ENCODE measurements at regions of chr6 and their contacts with region 1.

Region 1: DNA sequence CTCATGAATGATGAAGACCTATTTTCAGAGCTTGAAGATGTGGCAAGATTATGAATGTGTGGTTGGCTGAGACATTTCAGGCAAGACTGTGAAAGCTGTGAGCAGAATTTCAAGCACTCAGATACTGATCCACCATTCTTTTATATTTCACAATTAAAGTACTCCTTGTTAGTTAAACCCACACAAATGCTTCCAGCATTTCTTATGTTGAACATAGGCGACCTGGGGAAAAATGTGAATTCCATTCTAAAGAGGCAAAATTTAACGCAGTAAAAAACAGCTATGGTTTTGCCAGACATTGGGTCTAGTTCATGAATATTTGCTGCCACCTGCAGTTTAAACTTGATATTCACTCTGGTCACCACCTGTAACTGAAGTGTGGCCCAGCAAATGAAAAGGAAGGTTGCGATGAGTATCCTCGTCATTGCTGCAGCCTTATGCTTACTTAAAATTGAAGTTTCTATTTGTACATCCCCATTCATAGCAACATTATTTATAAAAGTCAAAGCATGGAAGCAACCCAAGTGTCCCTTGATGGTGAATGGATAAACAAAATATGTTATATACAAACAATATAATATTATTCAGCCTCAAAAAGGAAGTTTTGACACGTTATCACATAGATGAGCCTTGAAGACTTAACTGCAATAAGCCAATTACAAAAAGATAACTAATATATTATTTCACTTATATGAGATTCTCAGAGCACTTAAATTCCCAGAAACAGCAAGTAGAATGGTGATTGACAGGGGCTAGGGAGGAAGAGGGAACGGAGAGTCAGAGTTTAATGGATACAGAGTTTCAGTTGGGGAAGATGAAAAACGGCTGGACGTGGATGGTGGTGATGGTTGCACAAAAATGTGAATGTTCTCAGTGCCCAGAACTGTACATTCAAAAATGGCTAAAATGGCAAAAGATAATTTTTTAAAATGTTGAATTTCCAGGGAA is 32.4 kb upstream of the FAM184A start:
- DNase-seq: peak in 7 of 9 experiments; percentile 13 to 77 (median 48)
- ATAC-seq: peak; percentile 83
- H3K4me3 ChIP-seq: no peak overlapping the region
- H3K4me3 Mint-ChIP-seq: no peak overlapping the region
- H3K27ac ChIP-seq: no peak overlapping the region
- H3K27ac Mint-ChIP-seq: no peak overlapping the region
- H3K4me1 ChIP-seq: no peaks in the 10 kb centered on the region
- H3K4me1 Mint-ChIP-seq: peaks cover 11% of the 10 kb centered on the region
- H3K27me3 ChIP-seq: no peaks in the 10 kb centered on the region
- H3K27me3 Mint-ChIP-seq: no peaks in the 10 kb centered on the region
- CTCF ChIP-seq: peak; percentile 74

Region 2: DNA sequence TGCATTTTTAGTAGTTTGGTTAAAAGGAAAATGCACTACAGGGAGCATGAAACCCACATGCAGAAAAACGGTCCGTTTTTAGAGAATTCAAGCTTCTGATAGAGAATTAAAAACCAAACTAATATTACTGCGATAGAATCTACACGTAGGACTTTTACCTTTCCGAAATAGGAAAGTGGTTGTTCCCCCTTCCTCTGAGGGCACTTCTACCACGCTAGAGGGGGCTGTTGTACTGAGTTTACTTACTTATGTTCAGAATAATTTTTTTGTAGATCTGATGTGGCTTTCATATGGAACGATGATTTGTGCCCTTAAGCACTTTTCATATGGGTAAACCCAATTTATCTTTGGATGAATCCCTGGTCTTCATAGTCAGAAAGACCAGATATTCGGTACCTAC is 827.1 kb before region 1 on chr6:
- CTCF ChIA-PET with region 1: interaction called, 40 read pairs
- POLR2A ChIA-PET with region 1: no interaction called
- intact Hi-C with region 1: loop called (anchors 1 kb)
- DNase-seq: peak in 8 of 9 experiments; percentile 14 to 74 (median 52)
- ATAC-seq: peak; percentile 61
- H3K4me3 ChIP-seq: no peak overlapping the region
- H3K4me3 Mint-ChIP-seq: no peak overlapping the region
- H3K27ac ChIP-seq: no peak overlapping the region
- H3K27ac Mint-ChIP-seq: no peak overlapping the region
- H3K4me1 ChIP-seq: no peaks in the 10 kb centered on the region
- H3K4me1 Mint-ChIP-seq: peaks cover 2% of the 10 kb centered on the region
- H3K27me3 ChIP-seq: no peaks in the 10 kb centered on the region
- H3K27me3 Mint-ChIP-seq: peaks cover 11% of the 10 kb centered on the region
- CTCF ChIP-seq: peak; percentile 61

Region 3: DNA sequence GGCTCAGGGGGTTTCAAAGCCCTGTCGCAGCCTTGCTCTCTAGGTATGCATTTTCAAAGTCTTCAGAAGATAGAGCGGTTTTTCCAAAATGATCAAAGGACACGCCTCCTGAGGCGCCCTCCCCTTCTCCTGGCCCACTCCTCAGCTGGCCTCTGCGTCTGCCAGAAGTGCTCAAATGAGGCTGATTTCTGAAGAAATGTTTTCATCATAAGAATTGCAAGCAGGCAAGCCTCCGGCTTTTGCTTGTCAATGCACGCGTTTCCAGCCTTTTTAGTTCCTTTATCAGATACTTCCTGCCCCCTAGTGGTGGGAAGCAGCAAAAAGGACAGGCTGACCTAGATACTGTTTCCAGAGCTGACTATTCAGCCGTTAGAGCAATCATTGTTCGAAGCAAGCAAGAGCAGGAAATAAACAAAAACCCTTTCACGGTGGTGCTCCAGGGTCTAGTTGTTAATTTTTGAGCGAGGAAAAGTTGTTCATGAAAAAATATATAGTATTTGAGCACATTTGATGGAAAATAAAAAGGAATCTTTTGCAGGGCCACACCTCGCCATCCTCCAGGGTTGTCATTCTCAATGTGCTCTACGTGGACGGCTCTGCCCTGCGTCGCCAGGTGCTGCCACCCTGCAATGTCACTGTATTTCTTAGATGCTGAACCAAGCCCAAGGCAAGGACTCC is 310.3 kb before region 1 on chr6:
- CTCF ChIA-PET with region 1: interaction called, 10 read pairs
- POLR2A ChIA-PET with region 1: no interaction called
- intact Hi-C with region 1: no loop called
- DNase-seq: peak; percentile 61 to 90 (median 85)
- ATAC-seq: peak; percentile 85
- H3K4me3 ChIP-seq: peak overlapping the region in 1 of 2 experiments; percentile 28
- H3K4me3 Mint-ChIP-seq: peak overlapping the region; percentile 70
- H3K27ac ChIP-seq: peak overlapping the region in 1 of 2 experiments; percentile 38
- H3K27ac Mint-ChIP-seq: peak overlapping the region; percentile 94
- H3K4me1 ChIP-seq: peaks cover 23% of the 10 kb centered on the region
- H3K4me1 Mint-ChIP-seq: peaks cover 42% of the 10 kb centered on the region
- H3K27me3 ChIP-seq: no peaks in the 10 kb centered on the region
- H3K27me3 Mint-ChIP-seq: no peaks in the 10 kb centered on the region
- CTCF ChIP-seq: peak; percentile 91

Region 4: DNA sequence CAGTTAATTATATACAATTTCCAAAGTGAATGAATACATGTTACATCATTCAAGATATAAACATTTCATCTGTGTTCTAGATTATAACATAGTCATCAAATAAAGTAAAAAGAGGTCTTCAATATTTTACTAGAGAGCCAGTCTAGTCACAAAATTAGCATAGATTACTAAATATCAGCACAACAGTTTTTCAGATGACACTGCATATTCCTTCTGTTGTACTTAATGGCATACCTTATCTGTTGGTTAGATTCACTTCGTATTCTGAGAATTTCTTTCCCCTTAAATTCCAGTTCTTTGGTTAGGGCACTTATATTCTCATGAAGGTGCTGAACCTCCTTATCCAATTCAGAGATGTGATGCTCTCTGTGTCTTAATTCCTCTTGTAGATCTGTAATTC is 136.1 kb before region 1 on chr6:
- CTCF ChIA-PET with region 1: interaction called, 13 read pairs
- POLR2A ChIA-PET with region 1: no interaction called
- intact Hi-C with region 1: no loop called
- DNase-seq: no peak
- ATAC-seq: no peak
- H3K4me3 ChIP-seq: no peak overlapping the region
- H3K4me3 Mint-ChIP-seq: no peak overlapping the region
- H3K27ac ChIP-seq: no peak overlapping the region
- H3K27ac Mint-ChIP-seq: no peak overlapping the region
- H3K4me1 ChIP-seq: no peaks in the 10 kb centered on the region
- H3K4me1 Mint-ChIP-seq: no peaks in the 10 kb centered on the region
- H3K27me3 ChIP-seq: no peaks in the 10 kb centered on the region
- H3K27me3 Mint-ChIP-seq: no peaks in the 10 kb centered on the region
- CTCF ChIP-seq: no peak

Region 5: DNA sequence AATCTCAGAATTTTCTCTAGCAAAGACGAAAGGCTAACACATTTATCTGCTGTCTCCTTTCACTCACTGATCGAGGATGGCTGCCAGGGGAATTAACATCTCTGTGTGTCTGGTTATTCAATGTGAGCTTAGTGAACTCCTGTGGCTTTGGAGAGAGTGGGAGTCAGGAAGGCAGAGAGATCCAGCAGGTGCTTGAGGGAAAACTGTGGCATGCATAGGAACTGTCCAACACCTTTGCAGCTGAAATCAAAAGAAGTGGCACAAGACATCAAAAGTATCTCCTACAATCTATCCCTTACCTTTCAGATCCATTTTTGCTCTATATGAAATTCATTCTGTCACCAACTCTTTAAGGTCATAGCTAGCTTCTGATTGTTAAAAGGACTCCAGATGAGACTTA is 20.6 kb before region 1 on chr6:
- CTCF ChIA-PET with region 1: interaction called, 12 read pairs
- POLR2A ChIA-PET with region 1: no interaction called
- intact Hi-C with region 1: no loop called
- DNase-seq: no peak
- ATAC-seq: no peak
- H3K4me3 ChIP-seq: no peak overlapping the region
- H3K4me3 Mint-ChIP-seq: no peak overlapping the region
- H3K27ac ChIP-seq: no peak overlapping the region
- H3K27ac Mint-ChIP-seq: no peak overlapping the region
- H3K4me1 ChIP-seq: no peaks in the 10 kb centered on the region
- H3K4me1 Mint-ChIP-seq: no peaks in the 10 kb centered on the region
- H3K27me3 ChIP-seq: no peaks in the 10 kb centered on the region
- H3K27me3 Mint-ChIP-seq: peaks cover 8% of the 10 kb centered on the region
- CTCF ChIP-seq: no peak

Region 6: DNA sequence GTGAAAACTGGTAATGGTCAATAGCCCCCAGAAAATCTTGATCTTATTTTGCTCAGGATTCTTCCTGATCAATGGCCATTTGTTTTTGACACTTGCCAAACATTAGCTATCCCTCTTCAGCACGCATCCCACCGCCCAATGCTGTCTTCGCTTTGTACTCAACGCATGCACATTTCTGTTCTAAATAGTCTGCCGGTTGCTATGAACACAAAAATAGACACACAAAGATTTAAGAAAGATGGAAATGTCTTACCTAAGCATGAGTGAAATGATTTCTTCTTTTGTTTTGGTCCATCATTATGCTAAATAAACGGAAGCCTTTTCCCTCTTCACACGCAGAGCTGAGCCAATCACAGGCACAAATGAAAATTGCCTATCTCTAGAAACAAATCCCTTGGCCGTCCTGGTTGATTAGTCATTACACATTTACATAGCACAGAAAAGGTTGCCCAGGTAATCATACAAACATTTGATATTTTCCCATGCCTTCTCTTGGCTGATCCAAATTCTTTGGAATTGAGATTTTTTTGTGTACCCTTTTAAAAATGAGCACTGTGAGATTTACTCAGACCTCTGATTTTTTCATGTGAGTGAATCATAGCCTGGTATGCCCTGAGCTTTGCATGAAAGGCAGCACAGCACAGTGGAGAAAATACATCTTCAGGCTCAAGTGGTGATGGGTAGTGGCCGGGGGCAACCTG is 38.1 kb after region 1 on chr6:
- CTCF ChIA-PET with region 1: no interaction called
- POLR2A ChIA-PET with region 1: no interaction called
- intact Hi-C with region 1: no loop called
- DNase-seq: no peak
- ATAC-seq: no peak
- H3K4me3 ChIP-seq: no peak overlapping the region
- H3K4me3 Mint-ChIP-seq: no peak overlapping the region
- H3K27ac ChIP-seq: no peak overlapping the region
- H3K27ac Mint-ChIP-seq: no peak overlapping the region
- H3K4me1 ChIP-seq: no peaks in the 10 kb centered on the region
- H3K4me1 Mint-ChIP-seq: peaks cover 1% of the 10 kb centered on the region
- H3K27me3 ChIP-seq: no peaks in the 10 kb centered on the region
- H3K27me3 Mint-ChIP-seq: no peaks in the 10 kb centered on the region
- CTCF ChIP-seq: no peak

Measured in CD8-positive, alpha-beta T cell (primary cell).